ENCODE measurements at regions of chr20 and their contacts with region 1.

Region 1: DNA sequence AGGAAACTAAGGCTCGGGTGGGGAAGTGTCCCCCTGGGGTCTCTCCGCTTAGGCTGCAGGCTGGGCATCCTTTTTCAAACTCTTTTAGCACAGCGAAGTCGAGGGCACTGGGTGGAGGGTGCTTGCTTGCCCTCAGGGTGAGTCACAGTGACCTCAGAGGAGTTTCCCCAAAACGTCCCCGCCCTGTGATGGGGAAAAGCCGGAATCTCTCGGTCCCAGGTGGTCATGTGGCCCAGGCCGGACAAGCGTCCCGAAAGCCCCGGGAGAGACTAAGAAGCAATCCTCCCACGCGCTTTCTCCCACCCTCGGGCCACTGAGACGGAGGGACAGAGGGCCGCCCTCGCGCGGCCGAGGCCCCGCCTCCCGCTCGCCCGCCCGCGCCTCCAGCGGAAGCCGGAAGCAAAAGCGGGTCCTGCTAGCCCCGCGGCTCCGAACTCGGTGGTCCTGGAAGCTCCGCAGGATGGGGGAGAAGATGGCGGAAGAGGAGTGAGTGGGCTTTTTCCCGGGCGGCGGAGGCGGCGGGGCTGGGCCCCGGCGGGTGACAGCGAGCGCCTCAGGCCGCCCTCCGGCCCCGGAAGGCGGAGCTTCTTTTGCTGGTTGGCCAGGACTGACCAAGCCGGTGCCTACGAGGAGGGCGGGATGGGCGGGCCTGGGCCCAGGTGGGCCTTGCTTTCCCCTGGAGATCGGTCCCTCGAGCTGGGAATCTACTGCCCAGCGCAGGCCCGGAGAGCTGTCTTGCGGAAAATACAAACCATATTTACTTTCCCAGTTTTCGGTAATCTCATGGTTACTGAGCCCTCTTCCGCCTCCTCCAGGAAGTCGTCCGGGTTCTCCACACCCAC is at the start of gene SLC9A8:
- DNase-seq: peak; percentile 89
- ATAC-seq: peak; percentile 92
- H3K4me3 Mint-ChIP-seq: peak within 1 kb of the TSS; percentile 94
- H3K27ac Mint-ChIP-seq: peak within 1 kb of the TSS; percentile 98
- H3K4me1 Mint-ChIP-seq: peaks cover 28% of the 10 kb centered on the region
- H3K27me3 Mint-ChIP-seq: no peaks in the 10 kb centered on the region
- total RNA-seq, gene SLC9A8: 12.6 to 16.7 TPM

Region 2: DNA sequence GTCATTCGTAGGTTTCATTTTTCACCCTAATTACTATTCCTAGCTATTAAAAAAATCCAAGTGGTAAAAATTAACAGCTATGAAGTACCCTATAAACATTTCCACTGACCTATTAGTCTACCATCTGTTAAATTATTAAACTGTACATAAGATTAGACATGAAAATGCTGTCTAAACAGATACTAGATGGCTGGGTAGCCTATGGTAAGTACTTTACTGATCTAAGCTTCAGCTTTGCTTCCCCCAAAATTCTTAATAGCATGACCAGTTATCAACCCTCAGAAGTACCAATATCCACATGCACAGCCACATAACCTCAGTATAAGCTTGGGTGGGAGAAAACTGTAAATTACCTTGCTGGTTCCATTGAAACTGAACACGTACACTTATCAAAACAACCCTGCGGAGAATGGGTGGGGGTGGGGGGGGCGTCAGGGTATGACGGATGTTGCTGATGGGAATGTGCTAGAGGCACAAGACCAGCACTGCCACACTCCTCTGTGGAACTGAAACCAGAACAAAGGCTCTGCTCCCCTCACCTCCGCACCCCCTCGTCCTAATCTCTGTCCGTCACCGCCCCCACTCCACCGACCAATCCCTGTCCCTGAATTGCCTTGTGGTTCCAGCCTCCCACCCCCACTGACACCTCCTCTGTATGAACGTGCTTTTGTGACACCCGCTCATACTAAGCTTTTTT is 144.4 kb before region 1 on chr20:
- CTCF ChIA-PET with region 1: no interaction called
- POLR2A ChIA-PET with region 1: no interaction called
- intact Hi-C with region 1: loop called in 1 of 2 experiments (anchors 2 kb)
- DNase-seq: peak; percentile 77
- ATAC-seq: peak; percentile 69
- H3K4me3 Mint-ChIP-seq: peak overlapping the region; percentile 47
- H3K27ac Mint-ChIP-seq: peak overlapping the region; percentile 72
- H3K4me1 Mint-ChIP-seq: peaks cover 40% of the 10 kb centered on the region
- H3K27me3 Mint-ChIP-seq: no peaks in the 10 kb centered on the region

Region 3: GRCh38 chr20:49676581-49677291 is 135.9 kb before region 1 on chr20:
- CTCF ChIA-PET with region 1: no interaction called
- POLR2A ChIA-PET with region 1: interaction called, 3 read pairs
- intact Hi-C with region 1: loop called in 1 of 2 experiments (anchors 2 kb)
- DNase-seq: peak; percentile 51
- ATAC-seq: peak; percentile 66
- H3K4me3 Mint-ChIP-seq: no peak overlapping the region
- H3K27ac Mint-ChIP-seq: peak overlapping the region; percentile 27
- H3K4me1 Mint-ChIP-seq: peaks cover 59% of the 10 kb centered on the region
- H3K27me3 Mint-ChIP-seq: no peaks in the 10 kb centered on the region

Region 4: DNA sequence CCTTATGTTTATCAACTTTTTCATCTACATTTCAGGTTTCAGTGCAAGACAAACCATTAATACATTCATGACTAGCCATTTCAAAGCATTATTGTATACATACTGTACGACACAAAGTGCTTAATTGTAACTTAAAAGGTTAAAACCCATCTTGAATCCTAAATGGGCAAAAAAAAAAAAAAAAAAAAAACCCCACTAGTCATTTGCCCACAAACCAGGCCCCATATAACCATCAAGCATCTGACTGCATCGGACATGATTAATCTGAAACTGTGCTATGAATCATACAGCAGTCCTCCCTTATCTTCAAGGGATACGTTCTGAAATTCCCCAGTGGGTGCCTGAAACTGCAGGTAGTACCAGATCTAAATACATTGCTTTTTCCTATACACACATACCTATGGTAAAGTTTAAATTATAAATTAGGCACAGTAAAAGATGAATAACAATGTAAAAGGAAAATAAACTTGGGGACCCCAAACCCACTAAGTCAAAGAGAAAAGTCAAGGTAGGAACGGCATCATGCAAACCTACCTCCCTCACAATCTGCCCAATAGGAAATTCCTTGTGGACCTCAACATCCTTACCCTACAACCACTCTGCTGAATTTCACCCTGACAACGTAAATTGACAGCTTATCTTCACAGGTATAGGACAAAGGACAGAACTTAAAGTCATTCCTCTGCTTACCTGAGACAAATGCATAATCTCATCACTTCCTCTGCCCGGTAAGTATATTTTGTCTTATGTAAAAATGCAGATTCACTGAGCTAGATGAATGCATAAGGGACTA is 113.3 kb before region 1 on chr20:
- CTCF ChIA-PET with region 1: no interaction called
- POLR2A ChIA-PET with region 1: no interaction called
- intact Hi-C with region 1: loop called in 1 of 2 experiments (anchors 1 kb)
- DNase-seq: peak; percentile 47
- ATAC-seq: peak; percentile 87
- H3K4me3 Mint-ChIP-seq: peak overlapping the region; percentile 34
- H3K27ac Mint-ChIP-seq: peak overlapping the region; percentile 73
- H3K4me1 Mint-ChIP-seq: peaks cover 66% of the 10 kb centered on the region
- H3K27me3 Mint-ChIP-seq: no peaks in the 10 kb centered on the region

Region 5: DNA sequence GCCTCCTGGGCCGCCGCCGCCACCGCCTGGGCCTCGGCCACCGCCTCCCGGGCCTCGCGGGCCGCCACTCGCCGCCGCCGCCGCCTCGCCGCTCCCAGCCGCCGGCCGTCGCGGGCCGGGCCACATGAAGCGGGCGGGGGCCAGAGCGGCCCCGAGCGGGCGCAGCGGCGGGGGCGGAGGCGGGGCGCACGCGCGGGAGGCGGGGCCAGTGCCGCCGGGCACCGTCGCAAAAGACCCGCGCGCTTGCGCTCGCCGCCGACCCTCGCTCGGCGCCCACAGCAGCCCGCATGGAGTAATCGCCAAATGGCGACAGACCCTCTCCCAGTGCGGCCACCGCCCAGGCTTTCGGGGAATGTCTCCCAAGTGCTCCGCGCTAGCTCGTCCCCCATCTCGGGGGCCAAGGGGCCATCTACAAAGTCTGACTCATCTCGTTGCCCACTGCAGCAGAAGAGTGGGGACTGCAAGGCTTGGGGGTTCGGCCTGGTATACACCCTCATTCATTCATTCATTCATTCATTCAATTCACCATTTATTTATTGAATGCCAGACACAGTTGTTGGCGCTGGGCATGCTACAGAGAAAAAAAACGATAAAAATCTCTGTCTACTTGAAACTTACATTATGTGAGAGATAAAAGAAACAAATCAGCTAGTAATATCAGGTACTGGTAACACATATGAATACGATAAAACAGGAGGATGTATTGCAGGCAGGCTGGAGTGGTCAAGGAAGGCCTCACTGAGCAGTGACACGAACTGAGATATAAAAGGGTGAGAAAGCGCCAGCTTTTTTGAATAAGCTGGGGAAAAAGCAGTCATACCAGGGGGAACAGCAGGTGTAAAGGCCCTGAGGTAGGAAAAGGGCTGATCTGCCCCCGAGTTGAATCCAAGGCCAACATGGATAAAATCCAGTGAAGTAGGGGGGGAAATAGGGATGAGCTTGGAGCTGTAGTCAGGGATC is 98.7 kb before region 1 on chr20 and contains the start of gene B4GALT5:
- CTCF ChIA-PET with region 1: no interaction called
- POLR2A ChIA-PET with region 1: no interaction called
- intact Hi-C with region 1: loop called (anchors 2 kb)
- DNase-seq: peak; percentile 77
- ATAC-seq: peak; percentile 73
- H3K4me3 Mint-ChIP-seq: peak within 1 kb of the TSS; percentile 82
- H3K27ac Mint-ChIP-seq: peak within 1 kb of the TSS; percentile 91
- H3K4me1 Mint-ChIP-seq: peaks cover 49% of the 10 kb centered on the region
- H3K27me3 Mint-ChIP-seq: peaks cover 5% of the 10 kb centered on the region
- total RNA-seq, gene B4GALT5: 18.6 to 19.6 TPM

Region 6: GRCh38 chr20:50292324-50293243 is 479.9 kb after region 1 on chr20:
- CTCF ChIA-PET with region 1: no interaction called
- POLR2A ChIA-PET with region 1: no interaction called
- intact Hi-C with region 1: no loop called
- DNase-seq: peak; percentile 56
- ATAC-seq: no peak
- H3K4me3 Mint-ChIP-seq: no peak overlapping the region
- H3K27ac Mint-ChIP-seq: no peak overlapping the region
- H3K4me1 Mint-ChIP-seq: peaks cover 4% of the 10 kb centered on the region
- H3K27me3 Mint-ChIP-seq: peaks cover 2% of the 10 kb centered on the region

Region 7: GRCh38 chr20:50569864-50570836 is 757.5 kb after region 1 on chr20:
- CTCF ChIA-PET with region 1: no interaction called
- POLR2A ChIA-PET with region 1: no interaction called
- intact Hi-C with region 1: loop called in 1 of 2 experiments (anchors 10 kb)
- DNase-seq: peak; percentile 77
- ATAC-seq: peak; percentile 92
- H3K4me3 Mint-ChIP-seq: no peak overlapping the region
- H3K27ac Mint-ChIP-seq: peak overlapping the region; percentile 77
- H3K4me1 Mint-ChIP-seq: peaks cover 82% of the 10 kb centered on the region
- H3K27me3 Mint-ChIP-seq: no peaks in the 10 kb centered on the region